Adrenal gland (tissue), 19 donors: ENCODE measurements at regions of chr20 and their contacts with region 1.

Region 1: GRCh38 chr20:54822399-54822798 is 347.0 kb downstream of the DOK5 start:
- DNase-seq: no peak
- H3K4me3 ChIP-seq: no peak overlapping the region
- H3K27ac ChIP-seq: no peak overlapping the region
- H3K4me1 ChIP-seq: no peaks in the 10 kb centered on the region
- H3K27me3 ChIP-seq: no peaks in the 10 kb centered on the region
- CTCF ChIP-seq: no peak
- POLR2A ChIP-seq: no peak

Region 2: DNA sequence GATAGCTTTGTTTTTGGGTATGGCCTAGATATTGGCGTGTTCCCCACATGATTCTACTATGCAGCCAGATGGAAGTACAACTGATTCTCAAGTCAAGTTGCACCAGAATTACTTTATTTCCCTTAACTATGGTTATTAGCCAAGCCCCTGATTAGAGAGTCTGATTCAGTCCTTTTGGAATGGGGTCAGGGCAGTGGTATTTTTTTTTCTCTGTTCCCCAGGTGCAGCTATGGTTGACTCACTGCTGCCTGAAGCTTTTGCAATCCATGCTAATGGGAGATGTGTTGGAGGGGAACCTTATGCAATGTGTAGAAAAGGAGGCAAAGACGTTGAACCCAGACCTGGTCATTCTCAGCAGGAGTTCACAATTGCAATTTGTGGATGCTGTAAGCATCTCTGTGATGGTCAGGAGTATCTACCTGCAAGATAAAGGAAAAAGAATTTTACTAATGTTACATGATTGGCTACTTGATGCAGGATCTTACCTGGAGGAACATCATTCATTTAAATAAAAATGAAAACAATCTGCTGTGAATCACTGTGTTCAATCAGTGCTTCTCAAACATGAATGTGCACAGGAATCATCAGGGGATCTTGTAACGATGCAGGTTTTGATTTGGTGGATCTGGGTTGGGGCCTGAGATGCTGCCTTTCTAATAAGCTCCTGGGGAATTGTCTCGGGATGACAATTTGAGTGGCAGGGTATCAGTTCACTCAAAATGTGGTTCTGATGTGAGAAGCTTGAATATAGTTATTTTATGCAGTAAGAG is 565.1 kb before region 1 on chr20:
- intact Hi-C with region 1: no loop called
- DNase-seq: peak in 6 of 7 donors; percentile 36 to 72 (median 54)
- H3K4me3 ChIP-seq: no peak overlapping the region
- H3K27ac ChIP-seq: no peak overlapping the region
- H3K4me1 ChIP-seq: peaks cover 9 to 20% of the 10 kb centered on the region in 2 donors
- H3K27me3 ChIP-seq: no peaks in the 10 kb centered on the region
- CTCF ChIP-seq: no peak
- POLR2A ChIP-seq: peak in 1 of 2 donors; percentile 14

Region 3: GRCh38 chr20:54875285-54875684 is 52.9 kb after region 1 on chr20:
- intact Hi-C with region 1: loop called in 1 of 2 experiments (anchors 2 kb)
- DNase-seq: no peak
- H3K4me3 ChIP-seq: no peak overlapping the region
- H3K27ac ChIP-seq: no peak overlapping the region
- H3K4me1 ChIP-seq: no peaks in the 10 kb centered on the region
- H3K27me3 ChIP-seq: no peaks in the 10 kb centered on the region
- CTCF ChIP-seq: no peak
- POLR2A ChIP-seq: no peak